ENCODE measurements at regions of chr2 and their contacts with region 1.

Region 1: DNA sequence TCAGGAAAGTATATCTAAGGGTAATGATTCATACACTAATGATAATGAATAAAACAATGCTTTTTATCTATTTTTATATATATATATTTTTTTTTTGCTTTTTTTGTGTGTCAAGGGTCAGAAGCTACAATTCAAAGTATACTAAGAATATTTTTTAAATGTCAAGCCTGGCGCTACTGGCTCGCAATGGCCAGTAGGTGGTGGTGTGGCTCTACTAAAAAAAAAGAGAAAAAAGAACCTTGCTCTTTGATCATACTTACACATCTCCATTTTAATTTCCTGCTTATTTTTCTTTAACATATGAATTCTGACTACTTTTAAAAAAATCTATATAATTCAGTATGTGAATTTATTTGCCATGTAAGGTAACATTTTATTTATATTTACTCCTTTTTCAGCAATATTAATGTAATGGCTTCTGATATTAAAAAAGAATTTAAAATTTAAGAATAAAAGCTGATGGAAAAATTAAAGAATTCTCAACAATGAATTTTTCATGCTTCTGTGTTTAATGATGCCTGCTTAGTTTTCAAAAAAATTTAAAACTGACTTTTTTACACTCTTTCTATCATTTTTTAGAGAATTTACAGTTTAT is 232.9 kb downstream of the GULP1 start:
- DNase-seq: peak in 2 of 4 donors; percentile 42 to 61
- ATAC-seq: peak; percentile 76
- H3K4me3 ChIP-seq: no peak overlapping the region
- H3K27ac ChIP-seq: peak overlapping the region in 1 of 2 donors; percentile 30
- H3K4me1 ChIP-seq: no peaks in the 10 kb centered on the region
- H3K27me3 ChIP-seq: no peaks in the 10 kb centered on the region
- CTCF ChIP-seq: peak; percentile 48 to 78

Region 2: GRCh38 chr2:188050726-188051125 is 473.9 kb before region 1 on chr2:
- intact Hi-C with region 1: no loop called
- DNase-seq: no peak
- ATAC-seq: no peak
- H3K4me3 ChIP-seq: no peak overlapping the region
- H3K27ac ChIP-seq: no peak overlapping the region
- H3K4me1 ChIP-seq: no peaks in the 10 kb centered on the region
- H3K27me3 ChIP-seq: no peaks in the 10 kb centered on the region
- CTCF ChIP-seq: no peak

Region 3: DNA sequence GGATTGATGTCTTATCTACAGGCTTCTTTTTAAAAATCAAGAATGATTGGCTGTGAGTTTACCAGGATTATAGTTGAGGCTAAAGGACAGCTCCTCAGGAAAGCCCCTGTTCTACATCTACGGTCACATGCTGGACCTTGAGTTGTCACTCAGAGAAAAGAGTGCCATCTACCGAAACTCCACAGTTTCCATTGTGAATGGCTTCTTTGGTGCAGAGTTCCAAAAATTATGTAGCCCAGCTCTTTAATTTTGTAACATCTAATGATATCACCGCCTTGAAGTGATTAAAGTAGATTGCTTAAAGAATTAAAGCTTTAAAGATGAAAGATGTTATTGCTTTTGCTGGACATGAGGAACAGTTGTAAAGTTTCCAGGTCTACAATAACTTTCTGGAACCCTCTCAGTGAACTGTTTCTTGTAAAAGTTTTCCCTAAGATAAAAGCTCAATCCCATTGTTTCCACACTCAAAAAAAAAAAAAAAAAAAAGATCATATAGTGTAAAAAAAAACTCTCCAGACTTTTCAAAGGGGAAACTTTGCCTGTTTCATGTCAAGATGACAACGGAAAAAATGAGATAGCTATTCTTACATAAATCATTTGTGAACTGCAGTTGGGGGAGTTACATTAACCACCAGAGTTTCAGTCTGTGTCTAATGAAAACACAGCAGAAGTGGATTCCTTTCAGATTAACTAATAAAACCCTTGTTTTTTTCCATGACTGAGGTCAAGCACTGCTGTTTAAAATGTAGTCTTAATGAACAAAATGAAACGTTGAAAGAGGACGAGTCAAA is 453.9 kb after region 1 on chr2:
- intact Hi-C with region 1: loop called in 1 of 2 experiments (anchors 10 kb)
- DNase-seq: peak in 1 of 4 donors; percentile 61
- ATAC-seq: peak; percentile 68
- H3K4me3 ChIP-seq: peak overlapping the region; percentile 5 to 25
- H3K27ac ChIP-seq: peak overlapping the region in 1 of 2 donors; percentile 88
- H3K4me1 ChIP-seq: no peaks in the 10 kb centered on the region
- H3K27me3 ChIP-seq: no peaks in the 10 kb centered on the region
- CTCF ChIP-seq: peak in 1 of 2 donors; percentile 8

Measured in left lung (tissue), 14 donors.